ENCODE measurements at regions of chr20 and their contacts with region 1.

Region 1: DNA sequence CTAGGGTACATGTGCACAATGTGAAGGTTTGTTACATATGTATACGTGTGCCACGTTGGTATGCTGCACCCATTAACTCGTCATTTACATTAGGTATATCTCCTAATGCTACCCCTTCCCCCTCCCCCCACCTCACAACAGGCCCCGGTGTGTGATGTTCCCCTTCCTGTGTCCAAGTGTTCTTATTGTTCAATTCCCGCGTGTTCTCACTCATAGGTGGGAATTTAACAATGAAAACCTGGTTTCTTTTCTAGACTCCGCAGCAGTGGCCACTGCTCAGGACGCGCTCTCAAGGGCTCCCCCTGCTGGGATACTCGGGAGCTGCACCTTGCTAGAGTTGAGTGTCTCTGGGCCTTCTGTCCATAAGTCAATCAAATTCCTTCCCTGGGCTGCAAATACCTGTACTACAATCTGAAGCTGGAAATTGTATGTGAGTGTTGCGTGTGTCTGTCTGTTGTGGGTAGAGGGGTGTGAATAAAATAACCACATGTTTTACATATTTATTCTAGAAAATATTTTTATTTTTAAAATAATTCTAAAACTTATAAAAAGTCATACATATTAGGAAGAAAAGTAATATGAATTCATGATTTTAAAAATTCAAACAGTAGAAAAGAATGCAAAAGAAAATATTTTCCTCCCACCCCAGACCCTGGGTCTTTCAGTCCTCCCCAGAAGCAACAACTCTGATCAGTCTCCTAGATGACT is 8.2 kb upstream of the CEP250 start:
- DNase-seq: peak; percentile 83
- ATAC-seq: peak; percentile 100
- H3K4me3 Mint-ChIP-seq: peak overlapping the region; percentile 88
- H3K27ac Mint-ChIP-seq: no peak overlapping the region
- H3K4me1 Mint-ChIP-seq: peaks cover 6% of the 10 kb centered on the region
- H3K27me3 Mint-ChIP-seq: peaks cover 11% of the 10 kb centered on the region
- CTCF ChIP-seq: no peak

Region 2: DNA sequence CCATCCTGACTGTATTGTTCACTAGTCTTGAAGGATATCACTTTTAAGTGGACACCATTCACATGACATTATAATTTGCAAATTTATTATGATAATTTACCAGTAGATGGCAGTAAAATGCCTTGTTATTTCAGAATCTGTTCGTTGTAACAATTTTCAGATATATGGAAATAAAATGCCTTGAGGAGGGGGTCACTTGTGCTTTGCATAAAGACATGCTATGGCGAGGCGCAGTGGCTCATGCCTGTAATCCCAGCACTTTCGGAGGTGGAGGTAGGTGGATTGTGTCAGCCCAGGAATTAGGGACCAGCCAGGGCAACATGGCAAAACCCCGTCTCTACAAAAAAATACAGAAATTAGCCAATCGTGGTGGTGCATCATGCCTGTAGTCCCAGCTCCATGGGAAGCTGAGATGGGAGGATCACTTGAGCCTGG is 612.8 kb before region 1 on chr20:
- CTCF ChIA-PET with region 1: no interaction called
- POLR2A ChIA-PET with region 1: no interaction called
- intact Hi-C with region 1: loop called (anchors 1 kb)
- DNase-seq: no peak
- ATAC-seq: no peak
- H3K4me3 Mint-ChIP-seq: no peak overlapping the region
- H3K27ac Mint-ChIP-seq: no peak overlapping the region
- H3K4me1 Mint-ChIP-seq: peaks cover 2% of the 10 kb centered on the region
- H3K27me3 Mint-ChIP-seq: peaks cover 10% of the 10 kb centered on the region
- CTCF ChIP-seq: no peak

Region 3: GRCh38 chr20:35226775-35227681 is 220.2 kb before region 1 on chr20:
- CTCF ChIA-PET with region 1: no interaction called
- POLR2A ChIA-PET with region 1: no interaction called
- intact Hi-C with region 1: no loop called
- DNase-seq: peak; percentile 36
- ATAC-seq: peak; percentile 72
- H3K4me3 Mint-ChIP-seq: peak overlapping the region; percentile 69
- H3K27ac Mint-ChIP-seq: no peak overlapping the region
- H3K4me1 Mint-ChIP-seq: peaks cover 11% of the 10 kb centered on the region
- H3K27me3 Mint-ChIP-seq: peaks cover 37% of the 10 kb centered on the region
- CTCF ChIP-seq: no peak

Region 4: DNA sequence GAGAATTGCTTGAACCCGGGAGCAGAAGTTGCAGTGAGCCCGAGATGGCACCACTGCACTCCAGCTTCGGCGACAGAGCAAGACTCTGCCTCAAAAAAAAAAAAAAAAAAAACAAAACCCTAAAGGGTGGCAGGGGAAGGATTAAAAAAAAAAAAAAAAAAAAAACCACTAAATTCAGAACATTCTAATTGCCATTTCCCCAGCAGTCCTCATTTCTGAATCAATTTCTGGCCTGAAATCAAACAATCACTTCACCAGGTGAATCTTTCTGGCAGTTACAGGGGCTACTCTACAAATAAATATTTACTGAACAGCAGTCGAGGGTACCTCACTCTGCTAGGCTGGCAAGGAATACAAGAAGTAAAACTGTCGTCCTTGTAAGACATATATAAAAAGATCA is 36.6 kb before region 1 on chr20:
- CTCF ChIA-PET with region 1: no interaction called
- POLR2A ChIA-PET with region 1: no interaction called
- intact Hi-C with region 1: loop called (anchors 2 kb)
- DNase-seq: no peak
- ATAC-seq: no peak
- H3K4me3 Mint-ChIP-seq: peak overlapping the region; percentile 97
- H3K27ac Mint-ChIP-seq: no peak overlapping the region
- H3K4me1 Mint-ChIP-seq: peaks cover 19% of the 10 kb centered on the region
- H3K27me3 Mint-ChIP-seq: no peaks in the 10 kb centered on the region
- CTCF ChIP-seq: no peak

Region 5: GRCh38 chr20:35432430-35432735 is 14.9 kb before region 1 on chr20:
- CTCF ChIA-PET with region 1: interaction called, 10 read pairs
- POLR2A ChIA-PET with region 1: no interaction called
- intact Hi-C with region 1: no loop called
- DNase-seq: no peak
- ATAC-seq: no peak
- H3K4me3 Mint-ChIP-seq: no peak overlapping the region
- H3K27ac Mint-ChIP-seq: no peak overlapping the region
- H3K4me1 Mint-ChIP-seq: no peaks in the 10 kb centered on the region
- H3K27me3 Mint-ChIP-seq: no peaks in the 10 kb centered on the region
- CTCF ChIP-seq: no peak

Region 6: GRCh38 chr20:35575970-35576623 is 128.9 kb after region 1 on chr20:
- CTCF ChIA-PET with region 1: no interaction called
- POLR2A ChIA-PET with region 1: no interaction called
- intact Hi-C with region 1: no loop called
- DNase-seq: no peak
- ATAC-seq: no peak
- H3K4me3 Mint-ChIP-seq: no peak overlapping the region
- H3K27ac Mint-ChIP-seq: no peak overlapping the region
- H3K4me1 Mint-ChIP-seq: no peaks in the 10 kb centered on the region
- H3K27me3 Mint-ChIP-seq: no peaks in the 10 kb centered on the region
- CTCF ChIP-seq: no peak